Dorsolateral prefrontal cortex (tissue), 120 donors: ENCODE measurements at regions of chr6 and their contacts with region 1.

Region 1: GRCh38 chr6:93419304-93420162 is at the start of gene EPHA7:
- DNase-seq: peak; percentile 88 to 99 (median 94)
- H3K4me3 ChIP-seq: peak within 1 kb of the TSS; percentile 53 to 86 (median 73)
- H3K27ac ChIP-seq: peak within 1 kb of the TSS in 57 of 59 donors; percentile 8 to 90 (median 75)
- H3K27me3 ChIP-seq: peaks cover 0 to 20% (median 0%) of the 10 kb centered on the region in 45 donors
- CTCF ChIP-seq: peak in 21 of 56 donors; percentile 1 to 52 (median 26)
- total RNA-seq, gene EPHA7: 6.1 to 31.4 (median 18.2) TPM

Region 2: GRCh38 chr6:92810913-92811312 is 608.6 kb before region 1 on chr6:
- intact Hi-C with region 1: loop called in 1 of 2 experiments (anchors 5 kb)
- DNase-seq: no peak
- H3K4me3 ChIP-seq: no peak overlapping the region
- H3K27ac ChIP-seq: no peak overlapping the region
- H3K27me3 ChIP-seq: peaks cover 0 to 4% (median 0%) of the 10 kb centered on the region in 45 donors
- CTCF ChIP-seq: peak; percentile 21 to 61 (median 46)

Region 3: GRCh38 chr6:93036835-93037234 is 382.7 kb before region 1 on chr6:
- intact Hi-C with region 1: loop called in 1 of 2 experiments (anchors 5 kb)
- DNase-seq: no peak
- H3K4me3 ChIP-seq: no peak overlapping the region
- H3K27ac ChIP-seq: no peak overlapping the region
- H3K27me3 ChIP-seq: no peaks in the 10 kb centered on the region
- CTCF ChIP-seq: peak in 39 of 56 donors; percentile 11 to 54 (median 34)